ENCODE measurements at regions of chr21 and their contacts with region 1.

Region 1: GRCh38 chr21:39349211-39350093 is 564 bp upstream of the HMGN1 start:
- DNase-seq: peak; percentile 85 to 94
- ATAC-seq: peak; percentile 92 to 96
- H3K4me3 ChIP-seq: peak overlapping the region; percentile 59
- H3K27ac ChIP-seq: peak overlapping the region; percentile 91 to 93
- H3K4me1 ChIP-seq: peaks cover 26% of the 10 kb centered on the region; the same call in 2 of the 3 replicates
- CTCF ChIP-seq: no peak
- EP300 ChIP-seq: no peak
- POLR2A ChIP-seq: peak; percentile 64
- RAD21 ChIP-seq: no peak

Region 2: GRCh38 chr21:39379986-39380891 is 30.8 kb after region 1 on chr21:
- CTCF ChIA-PET with region 1: interaction called, 3 read pairs
- POLR2A ChIA-PET with region 1: interaction called, 20 read pairs
- DNase-seq: peak; percentile 72 to 92
- ATAC-seq: peak; percentile 97 to 98
- H3K4me3 ChIP-seq: peak overlapping the region; percentile 54
- H3K27ac ChIP-seq: peak overlapping the region; percentile 62 to 87
- H3K4me1 ChIP-seq: 0 out of 3 replicates have a peak, but pooled peaks cover 10% of the 10 kb centered on the region
- CTCF ChIP-seq: no peak
- EP300 ChIP-seq: no peak
- POLR2A ChIP-seq: peak; percentile 48
- RAD21 ChIP-seq: no peak

Region 3: DNA sequence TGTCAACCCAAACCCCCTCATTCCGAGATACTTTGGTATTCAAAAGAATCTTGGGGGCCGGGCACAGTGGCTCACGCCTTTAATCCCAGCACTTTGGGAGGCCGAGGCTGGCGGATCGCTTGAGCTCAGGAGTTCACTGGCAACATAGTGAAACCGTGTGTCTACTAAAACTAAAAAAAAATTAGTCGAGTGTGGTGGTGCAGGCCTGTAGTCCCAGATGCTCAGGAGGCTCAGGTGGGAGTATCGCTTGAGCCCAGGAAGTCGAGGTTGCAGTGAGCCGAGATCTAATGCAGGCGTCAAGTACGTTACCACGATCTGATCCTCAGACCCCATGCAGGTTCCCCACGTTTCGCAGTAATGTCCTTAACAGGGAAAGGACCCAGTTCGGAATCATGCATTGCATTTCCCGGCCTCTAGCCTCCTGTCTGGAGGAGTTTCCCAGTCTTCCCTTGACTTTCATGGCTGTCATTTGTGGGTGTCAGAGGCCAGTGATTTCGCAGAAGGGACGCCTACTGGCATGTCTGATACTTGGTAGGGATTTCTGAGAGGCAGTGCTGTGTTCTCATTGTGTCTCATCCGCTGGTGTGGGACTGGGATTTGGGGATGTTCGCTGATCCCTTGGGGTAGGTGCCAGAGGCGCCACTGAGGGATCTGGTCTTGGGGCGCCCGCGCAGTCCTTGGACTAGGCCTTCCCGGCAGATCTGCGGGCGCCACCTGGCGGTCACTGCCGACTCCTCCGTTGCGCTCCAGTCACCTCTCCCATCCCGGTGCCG is 38.8 kb after region 1 on chr21:
- CTCF ChIA-PET with region 1: interaction called, 6 read pairs
- POLR2A ChIA-PET with region 1: interaction called, 19 read pairs
- DNase-seq: peak; percentile 72 to 81
- ATAC-seq: peak; percentile 77 to 87
- H3K4me3 ChIP-seq: peak overlapping the region; percentile 47
- H3K27ac ChIP-seq: peak overlapping the region; percentile 86 to 96
- H3K4me1 ChIP-seq: peaks cover 19% of the 10 kb centered on the region
- CTCF ChIP-seq: peak; percentile 72
- EP300 ChIP-seq: no peak
- POLR2A ChIP-seq: no peak
- RAD21 ChIP-seq: peak; percentile 76 to 77

Measured in A549 (cell line).